ENCODE measurements at regions of chr1 and their contacts with region 1.

Region 1: DNA sequence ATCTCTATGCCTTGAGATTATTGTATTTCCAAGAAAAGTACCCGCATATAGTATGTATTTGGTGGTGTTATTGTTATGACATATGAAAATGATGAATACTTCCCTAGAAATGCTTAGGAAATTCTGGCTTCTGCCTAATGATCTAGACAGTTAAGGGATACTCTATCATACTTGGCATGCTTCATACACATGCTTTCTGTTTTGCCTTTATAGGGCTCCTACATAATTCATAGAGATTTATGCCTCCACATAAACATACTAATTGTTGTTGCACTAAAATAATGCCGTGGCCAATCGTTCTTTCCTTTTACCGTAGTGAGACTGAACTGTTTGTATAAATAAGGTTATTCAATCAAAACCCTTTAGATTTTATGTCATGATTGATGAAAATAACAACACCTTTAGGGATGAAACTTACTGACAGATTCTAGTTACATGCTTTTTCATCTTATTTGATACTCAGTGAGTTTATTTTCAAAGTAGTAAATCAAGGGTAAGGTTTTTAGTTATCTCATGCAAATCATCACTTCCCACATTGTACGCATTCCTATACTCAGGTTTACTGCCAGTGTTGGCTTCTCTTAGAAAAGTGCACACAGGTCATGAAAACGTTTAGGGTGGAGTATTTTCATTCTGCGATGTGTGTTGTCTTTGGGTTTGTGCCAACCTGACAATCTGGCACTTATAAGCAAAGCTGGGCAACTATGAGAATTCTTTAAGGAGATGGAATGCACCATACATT is 40.5 kb upstream of the SCYL3 start:
- DNase-seq: no peak
- H3K4me3 ChIP-seq: no peak overlapping the region
- H3K4me3 Mint-ChIP-seq: no peak overlapping the region
- H3K27ac Mint-ChIP-seq: no peak overlapping the region
- H3K4me1 ChIP-seq: no peaks in the 10 kb centered on the region
- H3K4me1 Mint-ChIP-seq: no peaks in the 10 kb centered on the region
- H3K27me3 ChIP-seq: no peaks in the 10 kb centered on the region
- H3K27me3 Mint-ChIP-seq: no peaks in the 10 kb centered on the region
- CTCF ChIP-seq: no peak

Region 2: DNA sequence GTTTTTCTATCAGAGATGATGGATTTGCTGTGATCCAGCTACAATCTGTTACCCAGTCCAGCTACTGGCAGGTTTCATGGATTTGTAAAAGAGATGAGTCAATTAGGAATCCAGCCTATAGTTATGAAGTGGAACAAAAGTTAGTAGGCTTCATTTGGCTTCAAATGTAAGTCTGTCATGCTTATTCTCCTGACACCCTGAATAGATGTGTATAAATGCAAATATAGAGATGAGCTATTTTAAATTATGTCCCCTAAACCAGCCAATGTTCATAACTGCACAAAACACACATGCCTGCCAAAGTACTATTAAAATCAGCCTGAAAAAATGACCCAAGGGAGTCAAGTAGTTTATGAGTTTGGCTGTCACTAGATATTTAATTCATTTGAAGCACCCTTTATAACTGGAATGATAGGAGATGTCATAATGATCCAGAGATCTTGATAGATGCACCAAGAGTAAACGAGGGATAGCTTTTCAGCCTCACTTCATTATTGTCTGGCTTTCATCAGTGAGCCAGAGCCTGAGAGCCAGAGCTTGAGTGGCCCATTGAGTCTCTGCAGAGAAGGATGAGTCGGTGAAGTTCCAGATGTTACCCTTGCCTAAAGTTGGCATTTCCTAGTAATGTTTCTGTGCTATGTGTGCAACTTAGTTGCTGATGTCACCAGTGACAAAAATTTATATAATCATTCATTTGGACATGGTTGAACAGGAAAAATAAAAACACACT is 199.8 kb after region 1 on chr1:
- CTCF ChIA-PET with region 1: no interaction called
- POLR2A ChIA-PET with region 1: no interaction called
- intact Hi-C with region 1: no loop called
- DNase-seq: no peak
- H3K4me3 ChIP-seq: no peak overlapping the region
- H3K4me3 Mint-ChIP-seq: no peak overlapping the region
- H3K27ac Mint-ChIP-seq: no peak overlapping the region
- H3K4me1 ChIP-seq: no peaks in the 10 kb centered on the region
- H3K4me1 Mint-ChIP-seq: peaks cover 7% of the 10 kb centered on the region
- H3K27me3 ChIP-seq: no peaks in the 10 kb centered on the region
- H3K27me3 Mint-ChIP-seq: peaks cover 14% of the 10 kb centered on the region
- CTCF ChIP-seq: no peak

Region 3: DNA sequence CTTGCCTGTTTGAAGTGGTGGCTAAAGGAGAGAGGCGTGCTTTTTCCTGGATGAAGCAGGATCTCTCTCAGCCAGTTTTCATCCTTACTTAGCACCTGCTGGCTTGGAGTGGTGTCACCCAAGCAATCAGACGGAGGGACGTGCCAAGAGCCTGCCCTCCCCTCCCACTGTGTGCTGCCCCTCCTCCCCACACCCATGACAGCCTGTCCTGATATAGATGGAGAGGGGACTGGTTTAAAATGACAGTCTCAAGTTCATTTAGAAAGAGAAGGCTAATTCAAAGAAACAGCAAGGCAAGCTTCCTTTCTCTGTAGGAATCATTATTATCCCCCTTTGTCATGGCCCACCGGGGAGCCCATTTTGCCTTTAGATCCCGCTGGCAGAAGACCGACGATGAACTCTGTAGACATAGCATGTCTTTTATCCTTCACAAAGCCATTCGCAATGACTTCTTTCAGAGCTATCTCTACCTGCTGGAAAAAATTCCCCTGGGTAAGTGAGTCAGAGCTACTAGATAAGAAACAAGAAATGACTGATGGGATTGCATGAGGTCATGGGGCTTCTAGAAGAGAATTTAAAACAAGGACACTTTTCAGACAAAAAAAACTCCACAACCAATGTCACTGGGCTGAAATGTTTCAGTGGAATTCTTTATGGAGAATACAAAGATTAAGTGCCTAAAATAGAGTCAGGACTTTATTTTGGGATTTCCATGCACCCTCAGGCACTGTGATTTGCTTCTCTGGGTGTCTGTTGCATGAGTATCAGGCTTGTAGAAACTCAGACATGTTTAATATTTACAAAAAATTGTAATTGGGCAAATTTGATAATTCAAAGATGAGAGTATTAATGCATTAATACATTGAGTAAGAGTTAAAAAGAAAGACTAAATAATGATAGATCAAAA is 211.9 kb after region 1 on chr1 and contains the start of gene NTMT2:
- CTCF ChIA-PET with region 1: no interaction called
- POLR2A ChIA-PET with region 1: no interaction called
- intact Hi-C with region 1: loop called (anchors 10 kb)
- DNase-seq: no peak
- H3K4me3 ChIP-seq: no peak within 1 kb of the TSS
- H3K4me3 Mint-ChIP-seq: peak within 1 kb of the TSS; percentile 55
- H3K27ac Mint-ChIP-seq: peak within 1 kb of the TSS; percentile 37
- H3K4me1 ChIP-seq: peaks cover 21% of the 10 kb centered on the region
- H3K4me1 Mint-ChIP-seq: peaks cover 23% of the 10 kb centered on the region
- H3K27me3 ChIP-seq: no peaks in the 10 kb centered on the region
- H3K27me3 Mint-ChIP-seq: no peaks in the 10 kb centered on the region
- CTCF ChIP-seq: no peak
- total RNA-seq, gene NTMT2: not detected in 2 replicates

Measured in Caco-2 (cell line).